Activated naive CD4-positive, alpha-beta T cell treated with anti-CD3 and anti-CD28 coated beads for 36 hours (primary cell): ENCODE measurements at regions of chr18 and their contacts with region 1.

Region 1: DNA sequence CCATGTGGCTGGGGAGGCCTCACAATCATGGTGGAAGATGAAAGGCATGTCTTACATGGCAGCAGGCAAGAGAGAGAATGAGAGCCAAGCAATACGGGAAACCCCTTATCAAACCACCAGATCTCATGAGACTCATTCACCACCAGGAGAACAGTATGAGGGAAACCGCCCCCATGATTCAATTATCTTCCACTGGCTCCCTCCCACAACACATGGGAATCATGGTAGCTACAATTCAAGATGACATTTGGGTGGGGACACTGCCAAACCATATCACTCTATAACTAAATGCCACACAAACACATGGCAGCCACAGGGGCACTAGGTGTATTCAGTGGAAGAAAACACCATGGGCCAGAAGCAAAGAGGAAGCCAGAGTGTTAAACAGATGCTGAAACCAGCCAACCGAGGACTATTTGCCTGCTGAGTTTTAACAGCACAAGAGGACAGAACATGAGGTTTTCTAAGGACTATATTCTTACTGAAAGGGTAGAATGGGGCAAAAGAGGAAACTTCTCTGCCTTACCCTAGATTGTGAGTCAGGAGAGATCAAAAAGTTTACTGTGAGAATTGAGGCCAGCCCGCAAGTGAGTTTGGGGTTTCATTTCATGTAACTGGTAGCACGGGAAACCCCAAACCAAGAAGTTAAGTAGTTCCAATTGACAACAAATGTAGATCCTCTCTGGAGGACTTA is 49.2 kb downstream of the SIGLEC15 start:
- DNase-seq: peak; percentile 88
- H3K4me3 Mint-ChIP-seq: peak overlapping the region; percentile 1
- H3K27ac Mint-ChIP-seq: peak overlapping the region; percentile 95
- H3K4me1 Mint-ChIP-seq: peaks cover 31% of the 10 kb centered on the region
- H3K27me3 Mint-ChIP-seq: no peaks in the 10 kb centered on the region

Region 2: GRCh38 chr18:45670281-45670962 is 204.2 kb before region 1 on chr18:
- CTCF ChIA-PET with region 1: interaction called, 128 read pairs
- intact Hi-C with region 1: loop called (anchors 1 kb)
- DNase-seq: peak; percentile 76
- H3K4me3 Mint-ChIP-seq: peak overlapping the region; percentile 56
- H3K27ac Mint-ChIP-seq: peak overlapping the region; percentile 81
- H3K4me1 Mint-ChIP-seq: peaks cover 61% of the 10 kb centered on the region
- H3K27me3 Mint-ChIP-seq: no peaks in the 10 kb centered on the region

Region 3: DNA sequence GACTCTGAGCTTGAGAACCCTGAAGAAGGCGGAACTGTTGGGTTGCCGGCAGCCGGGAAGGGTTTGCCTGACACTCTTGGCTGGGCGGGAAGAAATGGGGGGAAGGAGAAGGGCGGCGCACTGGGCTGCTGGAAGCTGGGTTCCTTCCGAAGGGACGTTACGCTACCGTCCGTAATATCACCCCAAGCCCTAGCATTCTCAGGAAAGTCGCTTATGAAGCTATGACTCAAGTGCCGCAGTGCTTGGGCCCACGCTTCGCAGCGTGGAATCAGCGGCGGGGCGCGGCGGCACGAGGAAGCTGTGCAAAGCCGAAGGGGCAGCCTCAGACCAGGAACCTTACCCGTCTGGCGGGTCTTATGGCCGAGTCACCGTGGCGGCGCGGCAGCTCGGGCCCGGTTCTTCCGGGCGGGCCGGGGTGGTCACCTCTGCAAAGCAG is 99.4 kb before region 1 on chr18:
- CTCF ChIA-PET with region 1: interaction called, 7 read pairs
- intact Hi-C with region 1: loop called (anchors 2 kb)
- DNase-seq: peak; percentile 83
- H3K4me3 Mint-ChIP-seq: peak overlapping the region; percentile 79
- H3K27ac Mint-ChIP-seq: no peak overlapping the region
- H3K4me1 Mint-ChIP-seq: peaks cover 10% of the 10 kb centered on the region
- H3K27me3 Mint-ChIP-seq: peaks cover 7% of the 10 kb centered on the region

Region 4: GRCh38 chr18:45935591-45936335 is 61.1 kb after region 1 on chr18:
- CTCF ChIA-PET with region 1: interaction called, 3 read pairs
- intact Hi-C with region 1: loop called (anchors 1 kb)
- DNase-seq: peak; percentile 7
- H3K4me3 Mint-ChIP-seq: no peak overlapping the region
- H3K27ac Mint-ChIP-seq: no peak overlapping the region
- H3K4me1 Mint-ChIP-seq: peaks cover 33% of the 10 kb centered on the region
- H3K27me3 Mint-ChIP-seq: no peaks in the 10 kb centered on the region

Region 5: DNA sequence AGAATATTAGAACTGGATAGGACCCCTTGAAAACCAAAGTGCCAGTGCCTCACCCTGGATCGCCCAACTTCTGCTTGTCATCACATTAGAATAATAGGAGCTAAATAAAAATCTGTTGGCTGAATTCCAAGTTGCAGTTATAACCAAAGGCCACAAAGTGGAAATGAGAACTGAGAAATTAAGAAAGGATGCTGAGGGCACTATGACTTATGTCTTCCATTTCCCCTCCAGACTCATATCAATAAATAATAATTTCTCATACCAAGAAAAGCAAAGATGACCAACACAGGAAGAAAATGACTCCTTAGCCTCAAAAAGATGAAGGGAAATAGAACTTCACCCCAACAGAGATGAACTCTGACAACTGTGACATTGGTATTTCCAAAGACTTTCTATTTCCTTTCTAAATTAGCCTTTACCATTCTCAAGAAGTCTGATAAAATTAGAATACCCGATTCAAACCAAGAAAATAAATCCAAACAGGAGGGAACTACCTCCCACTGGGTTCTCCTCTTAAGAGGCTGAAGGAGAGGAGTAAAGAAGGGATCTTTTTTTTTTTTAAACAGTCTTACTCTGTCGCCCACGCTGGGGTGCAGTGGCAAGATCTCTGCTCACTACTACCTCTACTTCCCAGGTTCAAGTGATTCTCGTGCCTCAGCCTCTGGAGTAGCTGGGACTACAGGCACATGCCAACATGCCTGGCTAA is 139.0 kb after region 1 on chr18:
- CTCF ChIA-PET with region 1: interaction called, 3 read pairs
- intact Hi-C with region 1: loop called (anchors 1 kb)
- DNase-seq: no peak
- H3K4me3 Mint-ChIP-seq: no peak overlapping the region
- H3K27ac Mint-ChIP-seq: no peak overlapping the region
- H3K4me1 Mint-ChIP-seq: peaks cover 13% of the 10 kb centered on the region
- H3K27me3 Mint-ChIP-seq: no peaks in the 10 kb centered on the region